Lower leg skin (tissue), 4 donors: ENCODE measurements at regions of chr12 and their contacts with region 1.

Region 1: DNA sequence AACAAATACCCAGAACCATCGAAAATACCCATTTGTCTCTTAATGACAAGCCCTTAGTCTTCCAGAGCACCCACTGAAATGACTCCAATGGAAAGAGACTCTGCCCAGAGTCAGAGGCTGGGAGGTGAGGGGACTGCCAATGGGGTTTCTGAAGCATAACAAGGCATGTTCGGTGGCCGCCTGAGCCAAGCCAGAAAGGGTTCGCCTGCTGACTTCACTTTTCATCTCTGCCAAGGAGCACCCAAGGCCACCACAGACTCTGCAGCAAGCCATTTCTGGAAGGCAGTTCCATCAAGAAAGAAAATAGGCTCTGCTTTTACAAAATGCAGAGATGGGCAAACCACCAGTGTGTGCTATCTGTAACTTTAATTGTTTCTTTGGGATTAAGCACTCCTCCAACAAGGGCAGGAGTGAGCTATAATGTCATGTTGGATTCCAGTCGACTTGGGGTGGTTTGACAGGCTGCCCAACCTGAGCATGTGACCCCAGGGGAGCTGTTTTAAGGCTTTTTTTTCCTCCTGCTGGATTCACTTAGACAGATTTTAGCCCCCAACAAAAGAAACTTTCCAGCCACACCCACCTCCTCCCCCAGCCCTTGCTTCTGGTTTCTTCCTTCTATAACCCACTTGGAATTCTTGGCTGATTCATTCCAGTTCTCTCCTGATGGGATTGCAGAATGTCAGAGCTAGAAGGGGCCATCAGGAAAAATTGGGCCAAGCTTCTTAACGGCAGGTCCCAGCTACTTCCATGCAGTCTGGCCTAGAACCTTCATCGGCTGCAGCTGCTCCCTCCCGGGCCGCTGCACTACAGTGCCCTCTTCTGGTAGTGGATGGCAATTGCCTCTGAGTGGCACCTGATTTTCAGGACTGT is 24.1 kb downstream of the CKAP4 start:
- DNase-seq: peak; percentile 54 to 93
- H3K4me3 ChIP-seq: no peak overlapping the region
- CTCF ChIP-seq: peak in 1 of 3 donors; percentile 89
- POLR2A ChIP-seq: no peak

Region 2: DNA sequence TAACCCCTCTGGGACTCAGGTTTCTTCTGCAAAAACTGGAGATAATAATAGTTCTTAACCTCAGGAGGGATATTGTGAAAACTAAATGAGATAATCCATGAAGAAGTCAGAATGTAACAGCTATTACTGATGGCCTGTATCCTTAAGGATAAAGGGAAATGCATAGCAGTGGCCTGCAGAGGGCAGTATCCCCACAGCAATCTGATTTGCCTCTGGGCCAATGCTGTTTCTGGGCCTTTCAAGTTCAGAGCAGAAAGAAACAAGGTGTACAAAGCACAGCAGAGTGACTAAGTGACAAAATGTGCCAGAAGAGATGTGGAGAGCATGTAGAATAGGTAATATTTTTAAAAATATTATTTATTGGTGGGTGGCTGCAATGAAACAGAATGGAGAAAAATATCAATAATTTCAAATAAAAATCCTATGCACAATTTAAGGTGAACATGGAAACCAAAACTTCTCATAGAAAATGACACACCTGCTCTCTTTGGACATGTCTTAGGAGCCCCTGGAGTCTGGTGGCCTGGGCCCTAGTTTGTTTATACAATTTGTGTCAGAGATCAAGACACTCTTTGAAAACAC is 803.0 kb before region 1 on chr12:
- intact Hi-C with region 1: loop called (anchors 5 kb)
- DNase-seq: peak; percentile 76 to 93
- H3K4me3 ChIP-seq: no peak overlapping the region
- CTCF ChIP-seq: peak in 2 of 3 donors; percentile 25 to 33
- POLR2A ChIP-seq: no peak

Region 3: DNA sequence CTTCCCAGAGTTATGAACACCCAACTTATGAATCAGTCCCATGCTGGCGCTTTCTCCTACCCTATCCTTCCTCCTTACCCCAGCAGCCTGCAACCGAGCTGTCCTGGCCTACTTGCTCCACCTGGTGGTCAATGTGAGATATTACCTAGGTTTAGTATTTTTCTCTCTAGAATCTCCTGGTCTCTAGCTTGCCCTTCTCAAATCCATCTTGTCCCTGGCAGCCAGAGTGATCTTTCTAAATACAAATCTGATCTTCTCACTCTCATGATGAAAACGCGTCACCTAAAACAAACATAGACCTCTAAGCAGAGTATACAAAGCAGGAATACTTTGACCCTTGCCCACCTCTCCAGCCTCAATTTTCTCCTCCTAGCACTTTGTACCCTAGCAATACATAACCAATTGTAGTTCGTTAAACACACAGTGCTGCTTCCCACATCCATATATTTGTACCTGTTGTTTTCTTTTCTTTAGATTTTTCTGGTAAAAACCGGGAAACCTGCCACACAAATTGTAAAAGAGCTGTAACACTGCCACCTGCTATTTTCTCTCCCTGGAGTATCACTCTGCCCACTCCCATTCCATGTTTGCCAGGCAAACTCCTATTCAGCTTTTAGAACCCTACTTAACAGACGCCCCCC is 58.9 kb after region 1 on chr12:
- intact Hi-C with region 1: loop called (anchors 10 kb)
- DNase-seq: peak in 1 of 2 donors; percentile 18
- H3K4me3 ChIP-seq: no peak overlapping the region
- CTCF ChIP-seq: peak in 1 of 3 donors; percentile 45
- POLR2A ChIP-seq: no peak

Region 4: GRCh38 chr12:106841510-106842302 is 618.0 kb after region 1 on chr12:
- intact Hi-C with region 1: loop called (anchors 5 kb)
- DNase-seq: peak in 1 of 2 donors; percentile 22
- H3K4me3 ChIP-seq: no peak overlapping the region
- CTCF ChIP-seq: no peak
- POLR2A ChIP-seq: no peak